H1 (cell line): ENCODE measurements at regions of chr20 and their contacts with region 1.

Region 1: GRCh38 chr20:32762149-32762753 is at the start of gene DNMT3B:
- DNase-seq: peak; percentile 82 to 97
- H3K4me3 ChIP-seq: peak within 1 kb of the TSS; percentile 92 to 100 (median 96)
- H3K27ac ChIP-seq: peak within 1 kb of the TSS; percentile 75
- H3K4me1 ChIP-seq: peaks cover 10 to 16% (median 13%) of the 10 kb centered on the region in 4 experiments
- H3K27me3 ChIP-seq: no peaks in the 10 kb centered on the region
- CTCF ChIP-seq: peak in 1 of 3 experiments; percentile 37; a peak in 2 of 4 replicates
- EP300 ChIP-seq: no peak
- POLR2A ChIP-seq: peak; percentile 81 to 89
- RAD21 ChIP-seq: peak in 1 of 2 experiments; percentile 37; a peak in 2 of 4 replicates
- total RNA-seq, gene DNMT3B: 1,016 and 1,038 TPM in 2 replicates

Region 2: DNA sequence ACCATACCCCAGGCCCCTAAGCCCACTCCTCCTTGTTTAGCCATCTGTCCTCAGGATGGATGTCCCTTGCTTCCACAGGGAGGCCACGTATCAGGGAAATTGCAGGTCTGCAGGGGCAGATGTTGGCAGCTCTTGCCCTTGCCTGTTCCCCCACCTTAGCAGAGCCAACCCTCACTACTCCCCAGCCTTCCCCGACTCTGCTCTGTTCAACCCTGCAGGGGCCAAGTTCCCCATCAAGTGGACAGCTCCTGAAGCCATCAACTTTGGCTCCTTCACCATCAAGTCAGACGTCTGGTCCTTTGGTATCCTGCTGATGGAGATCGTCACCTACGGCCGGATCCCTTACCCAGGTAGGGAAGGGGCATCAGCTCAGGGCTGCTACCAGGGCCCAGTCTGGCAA is 663.5 kb before region 1 on chr20:
- CTCF ChIA-PET with region 1: no interaction called
- POLR2A ChIA-PET with region 1: no interaction called
- DNase-seq: no peak
- H3K4me3 ChIP-seq: no peak overlapping the region
- H3K27ac ChIP-seq: no peak overlapping the region
- H3K4me1 ChIP-seq: no peaks in the 10 kb centered on the region; a peak in 1 of 7 replicates
- H3K27me3 ChIP-seq: peaks cover 0 to 4% (median 1%) of the 10 kb centered on the region in 4 experiments; a peak in 3 of 7 replicates
- CTCF ChIP-seq: no peak
- EP300 ChIP-seq: no peak
- POLR2A ChIP-seq: no peak
- RAD21 ChIP-seq: no peak

Region 3: DNA sequence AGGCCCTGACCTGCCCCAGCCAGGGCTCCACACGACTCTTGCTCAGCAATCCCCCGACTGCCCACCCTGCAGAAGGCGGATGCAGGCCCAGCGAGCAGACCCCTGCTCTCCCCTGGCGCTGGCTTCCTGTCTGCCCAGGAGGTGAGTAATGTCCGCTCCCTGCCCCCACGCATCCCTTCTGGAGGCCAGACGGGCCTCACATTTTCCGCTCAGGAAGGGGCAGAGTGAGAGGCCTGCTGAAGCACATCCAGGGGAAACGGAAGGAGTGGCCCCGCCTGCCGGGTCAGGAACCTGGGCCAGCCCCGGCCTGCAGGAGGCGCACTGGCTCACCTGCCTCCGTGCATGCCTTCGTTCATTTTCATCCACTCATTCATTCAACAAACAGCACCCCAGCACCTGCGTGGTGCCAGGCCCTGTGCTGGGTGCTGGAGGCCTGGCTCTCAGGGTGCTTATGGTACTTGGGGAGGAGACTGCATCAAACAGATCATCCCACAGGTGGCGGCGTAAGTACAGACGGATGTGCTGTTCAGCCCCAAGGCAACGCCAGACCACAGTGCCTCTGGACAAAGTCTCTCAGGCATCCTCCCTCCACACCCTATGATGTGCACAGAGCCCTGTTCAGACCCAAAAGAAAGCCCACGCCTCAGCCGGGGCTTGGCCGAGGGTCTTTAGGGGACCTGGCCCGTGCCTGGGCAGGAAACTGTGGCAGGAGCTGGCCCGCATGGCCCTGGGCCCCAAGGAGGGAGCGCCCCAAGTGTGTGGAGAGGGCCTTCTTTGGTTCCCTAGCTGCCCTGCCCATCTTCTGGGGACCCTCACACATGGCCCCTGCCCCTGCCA is 292.0 kb before region 1 on chr20:
- CTCF ChIA-PET with region 1: no interaction called
- POLR2A ChIA-PET with region 1: no interaction called
- DNase-seq: peak in 1 of 2 experiments; percentile 84
- H3K4me3 ChIP-seq: no peak overlapping the region
- H3K27ac ChIP-seq: peak overlapping the region; percentile 41
- H3K4me1 ChIP-seq: peaks cover 4 to 30% (median 21%) of the 10 kb centered on the region in 4 experiments; a peak in 6 of 7 replicates
- H3K27me3 ChIP-seq: no peaks in the 10 kb centered on the region
- CTCF ChIP-seq: peak; percentile 26 to 75 (median 71)
- EP300 ChIP-seq: no peak
- POLR2A ChIP-seq: no peak
- RAD21 ChIP-seq: peak; percentile 46 to 53; a peak in 3 of 4 replicates

Region 4: GRCh38 chr20:32642257-32643046 is 119.8 kb before region 1 on chr20:
- CTCF ChIA-PET with region 1: no interaction called
- POLR2A ChIA-PET with region 1: no interaction called
- DNase-seq: no peak
- H3K4me3 ChIP-seq: no peak overlapping the region
- H3K27ac ChIP-seq: no peak overlapping the region
- H3K4me1 ChIP-seq: no peaks in the 10 kb centered on the region
- H3K27me3 ChIP-seq: no peaks in the 10 kb centered on the region
- CTCF ChIP-seq: no peak
- EP300 ChIP-seq: no peak
- POLR2A ChIP-seq: no peak
- RAD21 ChIP-seq: no peak

Region 5: DNA sequence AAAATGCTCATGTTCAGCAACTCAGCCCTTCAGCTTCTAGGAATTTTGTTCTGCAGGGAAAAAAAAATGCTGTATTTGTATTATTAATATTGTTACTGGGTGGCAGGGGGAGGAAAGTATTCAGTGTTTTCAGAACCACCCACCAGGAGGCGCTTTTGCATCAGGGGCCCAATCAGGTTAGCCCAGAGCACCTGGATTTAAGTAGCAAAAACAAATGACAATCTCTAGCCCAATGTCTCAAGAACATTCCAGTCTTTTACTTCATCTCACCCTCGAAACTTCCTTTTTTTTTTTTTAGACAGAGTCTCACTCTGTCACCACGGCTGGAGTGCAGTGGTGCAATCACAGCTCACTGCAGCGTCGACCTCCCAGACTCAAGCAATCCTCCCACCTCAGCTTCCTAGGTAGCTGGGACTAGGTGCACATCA is 87.9 kb before region 1 on chr20:
- CTCF ChIA-PET with region 1: interaction called, 23 read pairs
- POLR2A ChIA-PET with region 1: interaction called, 29 read pairs
- DNase-seq: peak in 1 of 2 experiments; percentile 83
- H3K4me3 ChIP-seq: no peak overlapping the region
- H3K27ac ChIP-seq: no peak overlapping the region
- H3K4me1 ChIP-seq: peaks cover 4 to 15% (median 14%) of the 10 kb centered on the region in 4 experiments
- H3K27me3 ChIP-seq: no peaks in the 10 kb centered on the region
- CTCF ChIP-seq: peak; percentile 66 to 85 (median 77)
- EP300 ChIP-seq: no peak
- POLR2A ChIP-seq: no peak
- RAD21 ChIP-seq: peak; percentile 91 to 93

Region 6: GRCh38 chr20:32697608-32698007 is 64.6 kb before region 1 on chr20:
- CTCF ChIA-PET with region 1: interaction called, 3 read pairs
- POLR2A ChIA-PET with region 1: interaction called, 21 read pairs
- DNase-seq: no peak
- H3K4me3 ChIP-seq: no peak overlapping the region
- H3K27ac ChIP-seq: no peak overlapping the region
- H3K4me1 ChIP-seq: peaks cover 0 to 4% (median 2%) of the 10 kb centered on the region in 4 experiments; a peak in 1 of 7 replicates
- H3K27me3 ChIP-seq: no peaks in the 10 kb centered on the region
- CTCF ChIP-seq: no peak
- EP300 ChIP-seq: no peak
- POLR2A ChIP-seq: no peak; a peak in 1 of 3 replicates
- RAD21 ChIP-seq: no peak

Region 7: GRCh38 chr20:32743237-32744112 is 18.8 kb before region 1 on chr20 and contains the start of gene COMMD7:
- CTCF ChIA-PET with region 1: interaction called, 29 read pairs
- POLR2A ChIA-PET with region 1: interaction called, 239 read pairs
- DNase-seq: peak in 1 of 2 experiments; percentile 80
- H3K4me3 ChIP-seq: peak within 1 kb of the TSS; percentile 59 to 84 (median 72)
- H3K27ac ChIP-seq: no peak within 1 kb of the TSS
- H3K4me1 ChIP-seq: peaks cover 5 to 14% (median 9%) of the 10 kb centered on the region in 4 experiments; a peak in 6 of 7 replicates
- H3K27me3 ChIP-seq: no peaks in the 10 kb centered on the region
- CTCF ChIP-seq: no peak
- EP300 ChIP-seq: peak in 1 of 2 experiments; percentile 24; a peak in 1 of 3 replicates
- POLR2A ChIP-seq: peak in 1 of 2 experiments; percentile 49; a peak in 1 of 3 replicates
- RAD21 ChIP-seq: no peak
- total RNA-seq, gene COMMD7: 48.8 and 48.9 TPM in 2 replicates

Region 8: DNA sequence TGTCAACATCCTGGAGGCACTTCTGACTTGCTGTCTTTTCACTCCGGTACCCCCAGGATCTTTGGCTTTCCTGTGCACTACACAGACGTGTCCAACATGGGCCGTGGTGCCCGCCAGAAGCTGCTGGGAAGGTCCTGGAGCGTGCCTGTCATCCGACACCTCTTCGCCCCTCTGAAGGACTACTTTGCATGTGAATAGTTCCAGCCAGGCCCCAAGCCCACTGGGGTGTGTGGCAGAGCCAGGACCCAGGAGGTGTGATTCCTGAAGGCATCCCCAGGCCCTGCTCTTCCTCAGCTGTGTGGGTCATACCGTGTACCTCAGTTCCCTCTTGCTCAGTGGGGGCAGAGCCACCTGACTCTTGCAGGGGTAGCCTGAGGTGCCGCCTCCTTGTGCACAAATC is 45.5 kb after region 1 on chr20:
- CTCF ChIA-PET with region 1: no interaction called
- POLR2A ChIA-PET with region 1: interaction called, 13 read pairs
- DNase-seq: peak in 1 of 2 experiments; percentile 73
- H3K4me3 ChIP-seq: no peak overlapping the region
- H3K27ac ChIP-seq: 0 out of 2 replicates have a peak overlapping the region, but pooled peaks have one; percentile 36
- H3K4me1 ChIP-seq: peaks cover 8 to 33% (median 25%) of the 10 kb centered on the region in 4 experiments
- H3K27me3 ChIP-seq: no peaks in the 10 kb centered on the region
- CTCF ChIP-seq: no peak
- EP300 ChIP-seq: no peak
- POLR2A ChIP-seq: peak in 1 of 2 experiments; percentile 44; a peak in 1 of 3 replicates
- RAD21 ChIP-seq: no peak

Region 9: DNA sequence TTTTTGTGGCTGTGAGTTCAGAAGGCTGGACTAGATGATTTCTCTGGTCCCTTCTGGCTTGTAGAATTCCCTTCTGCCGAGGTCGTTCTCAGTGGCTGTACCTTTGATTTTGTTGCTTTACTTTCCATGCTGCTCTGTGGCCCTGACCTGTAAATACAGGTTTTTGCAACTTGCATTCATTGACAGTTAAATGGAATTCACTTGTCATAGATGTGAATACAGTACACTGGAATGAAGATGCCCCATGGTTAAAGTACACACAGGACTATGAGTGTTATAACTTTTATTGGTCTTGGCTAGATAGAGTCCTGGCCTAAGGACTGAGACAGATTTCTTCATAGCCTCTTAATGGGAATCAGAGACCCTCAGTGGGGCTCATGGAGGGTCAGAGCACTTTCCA is 83.5 kb after region 1 on chr20:
- CTCF ChIA-PET with region 1: no interaction called
- POLR2A ChIA-PET with region 1: no interaction called
- DNase-seq: no peak
- H3K4me3 ChIP-seq: no peak overlapping the region
- H3K27ac ChIP-seq: no peak overlapping the region
- H3K4me1 ChIP-seq: peaks cover 0 to 3% (median 0%) of the 10 kb centered on the region in 4 experiments; a peak in 2 of 7 replicates
- H3K27me3 ChIP-seq: no peaks in the 10 kb centered on the region
- CTCF ChIP-seq: no peak
- EP300 ChIP-seq: no peak
- POLR2A ChIP-seq: no peak
- RAD21 ChIP-seq: no peak